ENCODE measurements at regions of chr21 and their contacts with region 1.

Region 1: DNA sequence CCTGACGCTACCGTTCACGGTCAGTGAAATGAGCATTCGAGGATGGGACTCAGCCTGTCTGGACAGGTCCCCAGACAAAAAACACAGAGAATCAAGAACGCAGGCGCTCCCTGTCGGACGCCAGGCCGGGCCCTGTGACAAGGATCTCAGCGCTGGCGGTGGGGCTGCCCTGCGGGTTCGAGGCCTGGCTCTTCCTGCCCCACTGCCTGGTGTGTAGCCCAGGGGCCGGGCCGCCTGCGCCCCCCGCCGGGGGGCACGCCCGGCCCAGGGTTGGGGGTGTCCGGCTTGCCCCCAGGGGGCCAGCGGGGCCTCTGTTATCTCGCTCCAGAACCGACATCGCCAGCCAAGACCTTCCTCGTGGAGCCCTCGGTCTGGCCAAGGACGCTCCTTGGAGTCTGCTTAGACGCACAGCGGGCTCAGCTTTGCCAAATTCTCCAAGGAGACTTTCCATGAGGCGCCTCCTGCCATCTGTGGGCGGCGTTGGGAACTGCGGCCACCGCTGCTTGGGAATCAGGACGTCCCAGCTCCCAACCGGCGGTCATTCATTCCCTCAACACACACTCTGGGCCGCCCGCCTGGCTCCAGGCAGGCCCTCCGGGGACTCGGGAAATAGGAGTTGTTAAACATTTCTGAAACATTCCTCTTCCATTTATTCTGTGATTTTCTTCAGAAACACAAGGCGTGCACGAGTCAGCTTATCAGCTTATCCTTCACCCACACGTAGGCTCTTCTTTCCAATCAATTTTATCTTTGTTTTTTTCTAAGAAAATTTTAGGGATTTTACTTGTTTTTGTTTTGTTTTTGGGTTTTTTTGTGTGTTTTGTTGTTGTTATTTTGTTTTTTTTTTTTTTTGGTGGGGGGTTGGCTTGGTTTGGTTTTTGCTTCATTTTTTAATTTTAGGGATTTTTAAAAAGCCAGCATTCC is 11.4 kb upstream of the RIPK4 start:
- DNase-seq: peak; percentile 92 to 96
- H3K4me3 ChIP-seq: peak overlapping the region in 1 of 2 donors; percentile 34
- H3K27ac ChIP-seq: peak overlapping the region; percentile 74 to 75
- H3K4me1 ChIP-seq: peaks cover 0 to 19% (median 6%) of the 10 kb centered on the region in 4 donors
- H3K27me3 ChIP-seq: peaks cover 0 to 14% of the 10 kb centered on the region in 2 donors
- CTCF ChIP-seq: peak; percentile 96 to 98

Region 2: DNA sequence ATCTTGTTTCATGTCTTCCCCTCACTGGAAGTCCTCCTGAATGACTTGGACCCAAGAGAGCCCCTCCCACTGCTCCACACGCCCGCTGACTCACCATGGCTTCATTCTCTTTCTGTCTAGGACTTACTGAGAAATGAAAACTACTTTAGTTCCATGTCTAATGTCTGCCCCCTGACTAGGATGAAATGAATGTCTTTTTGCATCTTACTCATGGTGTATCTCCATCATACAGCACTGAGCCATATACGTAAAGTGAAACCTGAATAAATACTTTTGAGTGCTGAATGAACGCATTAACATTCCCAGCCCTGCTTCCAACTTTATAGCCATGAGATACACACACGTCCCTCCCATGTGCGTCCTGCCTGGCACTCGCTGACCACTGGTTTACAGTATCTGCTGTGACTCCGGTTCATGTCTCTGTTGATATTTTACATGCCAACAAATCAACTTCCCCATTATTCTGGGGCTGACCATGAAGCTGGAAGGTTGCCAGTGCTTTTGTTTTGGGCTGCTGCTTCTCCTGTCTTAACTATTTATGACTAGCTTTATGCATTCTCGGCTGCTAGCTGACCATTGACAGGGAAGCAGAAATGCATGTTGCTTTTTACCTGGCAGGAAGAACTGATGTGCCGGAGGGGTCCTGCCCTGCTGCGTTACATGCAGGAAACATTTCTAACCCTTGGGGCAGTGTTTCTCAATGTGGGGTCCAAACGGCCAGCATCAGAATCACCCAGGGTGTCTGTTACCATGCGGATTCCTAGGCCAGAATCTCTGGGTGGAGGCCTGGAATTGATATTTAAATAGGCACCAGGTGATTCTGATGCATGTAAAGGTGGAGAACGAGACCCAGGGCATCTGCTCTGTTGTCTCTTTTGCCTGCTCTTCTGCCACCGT is 1728.6 kb before region 1 on chr21:
- intact Hi-C with region 1: loop called (anchors 10 kb)
- DNase-seq: peak; percentile 44 to 82
- H3K4me3 ChIP-seq: no peak overlapping the region
- H3K27ac ChIP-seq: peak overlapping the region; percentile 76 to 79
- H3K4me1 ChIP-seq: peaks cover 0 to 77% (median 41%) of the 10 kb centered on the region in 4 donors
- H3K27me3 ChIP-seq: no peaks in the 10 kb centered on the region
- CTCF ChIP-seq: no peak

Region 3: DNA sequence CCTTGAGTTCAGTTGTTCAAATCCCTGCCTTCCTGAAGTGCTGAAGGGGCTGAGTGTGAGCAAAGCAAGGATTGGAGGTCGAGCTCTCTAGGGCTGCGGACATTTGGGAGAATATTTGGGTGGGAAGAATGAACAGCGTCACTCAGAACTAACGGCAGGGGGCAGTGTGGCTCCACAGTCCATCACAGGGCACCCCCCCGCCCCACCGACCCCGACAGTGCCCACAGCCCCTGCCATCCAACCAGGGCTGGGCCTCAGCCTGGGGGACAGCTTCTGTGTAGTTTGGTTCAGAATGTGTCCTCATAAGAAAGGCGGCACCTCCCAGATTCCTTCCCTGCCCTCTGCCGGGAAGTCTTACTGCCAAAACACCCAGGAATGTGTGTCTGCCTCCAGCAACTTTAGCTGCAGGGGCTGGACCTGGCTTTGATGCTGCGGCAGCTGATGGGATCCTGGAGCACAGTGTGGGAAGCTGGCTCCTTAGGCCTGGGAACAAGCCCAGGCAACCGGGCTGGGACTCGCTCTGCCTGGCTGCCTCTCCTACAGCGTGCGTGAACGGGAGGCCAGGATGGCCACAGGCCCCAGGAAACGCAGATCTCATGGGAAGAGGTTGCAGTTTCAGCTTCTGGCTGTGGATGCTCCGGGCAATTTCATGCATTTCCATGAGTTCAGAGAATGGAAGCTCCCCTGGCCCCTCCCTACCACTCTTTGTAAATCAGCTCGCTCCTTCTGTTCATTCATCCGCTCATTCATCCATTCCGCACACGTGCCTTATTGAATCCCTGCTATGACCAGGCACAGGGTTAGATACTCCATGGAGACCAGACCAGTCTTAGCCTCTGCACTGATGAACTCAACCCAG is 165.3 kb before region 1 on chr21:
- intact Hi-C with region 1: loop called (anchors 1 kb)
- DNase-seq: peak; percentile 90 to 97
- H3K4me3 ChIP-seq: no peak overlapping the region
- H3K27ac ChIP-seq: peak overlapping the region; percentile 92 to 95
- H3K4me1 ChIP-seq: peaks cover 11 to 62% (median 54%) of the 10 kb centered on the region in 4 donors
- H3K27me3 ChIP-seq: no peaks in the 10 kb centered on the region
- CTCF ChIP-seq: peak; percentile 94

Region 4: DNA sequence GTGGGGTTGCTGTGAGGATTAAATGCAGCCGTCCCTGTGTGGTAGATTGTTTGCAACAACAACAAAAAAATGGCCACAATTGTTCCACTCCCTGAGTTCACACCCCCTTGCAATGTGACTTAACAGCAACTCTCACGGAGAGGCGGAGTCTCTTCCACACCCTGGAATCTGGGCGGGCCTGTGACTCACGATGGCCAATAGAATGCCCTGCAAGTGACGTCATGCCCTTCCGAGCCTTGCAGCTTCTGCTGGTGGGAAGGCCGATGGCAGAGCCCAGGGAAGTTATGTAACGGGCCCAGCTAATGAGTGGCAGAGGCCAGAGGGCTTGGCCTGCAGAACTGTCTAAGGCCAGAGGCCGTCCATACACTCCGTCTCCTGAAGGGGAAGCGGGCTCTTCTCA is 99.3 kb before region 1 on chr21:
- intact Hi-C with region 1: loop called (anchors 5 kb)
- DNase-seq: peak; percentile 88 to 97
- H3K4me3 ChIP-seq: no peak overlapping the region
- H3K27ac ChIP-seq: peak overlapping the region; percentile 58 to 75
- H3K4me1 ChIP-seq: peaks cover 0 to 41% (median 25%) of the 10 kb centered on the region in 4 donors
- H3K27me3 ChIP-seq: no peaks in the 10 kb centered on the region
- CTCF ChIP-seq: no peak

Region 5: DNA sequence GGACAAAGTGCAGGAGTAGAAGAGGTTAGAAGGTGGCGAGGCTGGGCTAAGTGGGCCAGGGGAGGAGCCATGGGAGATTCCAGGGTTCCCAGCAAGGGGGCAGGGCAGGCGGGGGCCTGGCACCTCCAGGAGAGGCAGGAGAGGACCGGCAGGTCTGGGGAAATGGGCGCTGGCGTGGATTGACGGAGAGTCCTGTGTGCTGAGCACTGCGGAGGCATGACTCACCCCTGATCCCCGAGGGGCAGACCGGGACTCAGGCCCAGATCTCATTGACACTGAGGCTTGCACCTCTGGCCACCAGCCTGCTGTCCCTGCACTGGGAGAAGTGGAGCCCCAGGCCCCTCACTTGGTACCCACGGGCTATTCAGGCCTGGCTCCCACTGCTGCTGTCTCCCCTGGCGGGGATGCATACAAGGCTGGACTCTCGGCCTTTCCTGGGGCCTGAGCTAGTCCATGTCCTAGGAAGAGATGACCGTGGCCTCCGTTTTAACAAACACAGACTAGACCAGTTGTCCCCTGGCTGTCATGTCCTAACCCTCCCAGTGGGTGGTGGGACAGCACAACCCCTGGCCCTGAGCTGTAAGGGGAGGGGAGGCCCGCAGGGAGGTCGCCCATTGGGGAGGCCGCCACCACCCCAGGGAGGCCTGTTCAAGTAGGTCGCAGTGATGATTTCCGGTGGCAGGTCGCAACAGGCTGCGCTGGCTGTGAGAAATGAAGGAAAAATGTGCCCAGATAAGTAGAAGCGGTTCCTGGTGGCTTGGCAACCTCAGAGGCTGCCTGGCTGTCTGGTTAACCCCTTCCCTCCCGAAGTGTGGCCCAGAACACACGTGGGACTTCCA is 51.0 kb before region 1 on chr21:
- intact Hi-C with region 1: no loop called
- DNase-seq: peak; percentile 86 to 96
- H3K4me3 ChIP-seq: no peak overlapping the region
- H3K27ac ChIP-seq: peak overlapping the region; percentile 87 to 88
- H3K4me1 ChIP-seq: peaks cover 6 to 32% (median 23%) of the 10 kb centered on the region in 4 donors
- H3K27me3 ChIP-seq: no peaks in the 10 kb centered on the region
- CTCF ChIP-seq: no peak

Region 6: DNA sequence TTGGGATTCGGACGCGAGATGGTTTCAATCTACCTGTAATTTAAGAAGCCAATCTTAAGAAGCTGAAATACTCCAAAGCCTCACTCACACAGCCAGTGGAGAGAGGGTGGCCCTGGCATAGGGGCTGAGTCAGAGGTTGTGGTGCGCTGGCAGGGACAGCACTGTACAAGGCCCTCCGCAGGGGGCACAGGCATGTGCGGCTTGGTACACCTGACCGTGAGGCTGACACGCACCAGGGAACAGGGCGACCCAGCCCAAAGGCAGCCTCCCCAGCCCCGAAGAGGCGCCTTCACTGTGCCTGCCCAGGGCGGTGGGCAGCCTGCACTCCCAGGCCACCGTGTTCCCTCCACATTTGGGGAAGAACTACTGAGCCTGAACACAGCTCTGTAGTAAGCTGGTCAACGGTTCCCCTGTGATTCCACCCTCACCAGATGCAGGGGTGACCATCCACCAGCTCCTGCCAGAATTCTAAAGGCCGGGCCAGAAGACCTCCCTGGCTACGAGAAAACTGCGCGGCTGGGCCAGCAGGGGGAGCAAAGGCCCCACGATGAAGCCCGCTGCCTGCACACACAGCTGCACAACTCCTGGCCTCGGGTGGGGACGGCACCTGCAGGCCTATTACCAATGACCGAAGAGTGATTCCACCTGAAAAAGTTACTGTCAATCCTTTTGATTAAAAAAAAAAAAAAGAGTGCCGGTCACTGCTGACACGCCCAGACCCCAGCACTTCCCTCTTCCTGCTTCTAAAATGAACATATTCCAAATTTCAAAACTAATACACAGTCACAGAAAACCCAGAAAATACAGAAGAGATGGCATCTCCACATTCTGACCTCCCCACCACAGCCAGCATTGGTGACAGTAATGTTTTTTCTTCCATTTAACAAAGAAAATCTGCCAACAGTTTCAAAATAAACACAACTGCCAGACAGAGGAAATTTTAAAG is 38.3 kb after region 1 on chr21:
- intact Hi-C with region 1: loop called (anchors 5 kb)
- DNase-seq: peak; percentile 54 to 80
- H3K4me3 ChIP-seq: no peak overlapping the region
- H3K27ac ChIP-seq: peak overlapping the region; percentile 37 to 46
- H3K4me1 ChIP-seq: peaks cover 0 to 10% (median 7%) of the 10 kb centered on the region in 4 donors
- H3K27me3 ChIP-seq: no peaks in the 10 kb centered on the region
- CTCF ChIP-seq: peak; percentile 77 to 85

Measured in tibial artery (tissue), 4 donors.